ENCODE measurements at regions of chr1 and their contacts with region 1.

Region 1: GRCh38 chr1:151728151-151729054 is 7.1 kb downstream of the RIIAD1 start:
- DNase-seq: no peak
- H3K27ac ChIP-seq: no peak overlapping the region
- CTCF ChIP-seq: no peak

Region 2: DNA sequence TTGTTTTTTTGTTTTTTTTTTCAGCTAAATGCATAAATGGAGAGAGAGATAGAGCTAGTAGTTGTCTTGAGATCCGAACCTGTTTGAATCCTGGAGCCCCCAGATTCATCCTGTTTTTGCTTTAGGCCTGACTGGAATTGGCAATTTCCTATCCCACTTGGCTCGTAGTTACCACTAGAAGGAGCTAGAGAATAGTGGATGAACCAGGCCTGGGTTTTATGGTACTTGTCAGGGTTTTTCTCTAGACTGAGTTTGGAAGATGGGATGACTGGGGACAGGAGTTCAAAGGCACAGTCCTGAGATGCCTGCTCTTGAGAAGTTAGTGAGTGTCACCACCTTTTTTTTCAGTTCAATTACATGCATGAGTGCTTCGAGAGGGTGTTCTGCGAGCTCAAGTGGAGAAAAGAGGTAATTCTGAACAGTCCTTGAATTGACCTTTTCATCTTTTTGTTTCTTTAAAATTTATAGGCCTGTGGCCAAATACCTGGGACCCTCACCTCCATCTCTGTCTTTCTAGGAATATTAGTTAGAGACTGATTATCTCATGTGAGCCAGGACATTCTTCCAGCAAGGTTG is 35.2 kb before region 1 on chr1:
- CTCF ChIA-PET with region 1: interaction called, 12 read pairs
- POLR2A ChIA-PET with region 1: no interaction called
- DNase-seq: peak; percentile 35
- H3K27ac ChIP-seq: no peak overlapping the region
- CTCF ChIP-seq: peak; percentile 58

Region 3: GRCh38 chr1:151837208-151837596 is 108.8 kb after region 1 on chr1:
- CTCF ChIA-PET with region 1: interaction called, 11 read pairs
- POLR2A ChIA-PET with region 1: interaction called, 5 read pairs
- DNase-seq: no peak
- H3K27ac ChIP-seq: peak overlapping the region; percentile 77
- CTCF ChIP-seq: no peak

Measured in RWPE1 (cell line).